Activated CD4-positive, alpha-beta memory T cell treated with anti-CD3 and anti-CD28 coated beads, Interleukin-2, amount 10 ng/mL, durations not matched to agents 7 days and 5 days (primary cell): ENCODE measurements at regions of chr11 and their contacts with region 1.

Region 1: DNA sequence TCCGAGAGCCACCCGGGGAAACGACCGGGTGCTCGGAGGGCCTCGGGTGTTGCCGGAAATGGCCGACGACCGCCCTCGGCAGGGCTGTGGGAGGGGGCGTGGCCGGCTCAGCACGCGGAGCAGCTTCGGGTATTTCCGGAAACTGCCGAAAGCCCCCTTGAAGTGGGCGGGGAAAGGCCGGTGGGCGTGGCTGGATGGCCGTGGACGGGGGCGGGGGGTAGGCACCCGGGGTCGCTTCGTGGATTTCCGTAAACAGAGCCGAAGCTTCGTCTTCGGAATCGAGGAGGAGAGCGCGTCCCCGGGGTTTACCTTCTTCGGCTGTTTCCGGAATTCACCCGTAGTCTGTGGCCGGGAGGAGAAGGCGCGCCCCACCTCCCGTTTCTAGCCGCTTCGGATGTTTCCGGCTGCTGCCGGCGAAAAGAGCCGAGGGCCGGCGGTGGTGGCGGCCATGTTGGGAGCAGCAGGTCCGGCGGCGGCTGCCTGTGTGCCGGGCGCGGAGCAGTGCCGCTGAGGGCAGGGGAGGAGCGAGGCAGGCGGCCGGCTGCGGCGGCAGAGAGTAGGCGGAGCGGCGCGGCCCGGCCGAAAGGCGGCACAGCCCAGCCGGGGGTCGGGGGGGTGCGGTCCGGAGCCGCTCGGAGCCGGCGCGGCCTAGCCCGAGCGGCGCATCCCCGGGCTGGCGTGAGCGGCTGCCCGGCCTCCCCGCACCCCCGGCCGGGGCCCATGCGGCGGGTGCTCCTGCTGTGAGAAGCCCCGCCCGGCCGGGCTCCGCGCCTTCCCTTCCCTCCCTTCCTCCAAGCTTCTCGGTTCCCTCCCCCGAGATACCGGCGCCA is at the start of gene MARK2:
- DNase-seq: peak; percentile 100
- H3K4me3 Mint-ChIP-seq: peak within 1 kb of the TSS; percentile 87
- H3K27ac Mint-ChIP-seq: peak within 1 kb of the TSS; percentile 85
- H3K4me1 Mint-ChIP-seq: peaks cover 49% of the 10 kb centered on the region
- H3K27me3 Mint-ChIP-seq: no peaks in the 10 kb centered on the region
- total RNA-seq, gene MARK2: 48.7 to 54.2 TPM

Region 2: DNA sequence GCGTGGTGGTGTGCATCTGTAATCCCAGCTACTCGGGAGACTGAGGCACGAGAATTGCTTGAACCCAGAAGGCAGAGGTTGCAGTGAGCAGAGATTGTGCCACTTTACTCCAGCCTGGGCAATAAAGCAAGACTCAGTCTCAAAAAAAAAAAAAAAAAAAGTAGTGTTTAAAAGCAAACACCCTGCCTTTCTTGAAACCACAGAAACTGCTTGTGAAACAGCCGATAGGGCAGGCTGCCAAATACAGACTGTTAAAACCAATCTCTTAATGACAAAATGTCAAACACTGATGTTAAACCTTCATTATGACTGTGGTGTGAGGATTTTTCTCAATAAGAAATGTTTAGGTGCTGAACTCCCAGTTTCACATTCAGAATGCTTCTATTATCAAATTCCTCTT is 27.3 kb after region 1 on chr11:
- CTCF ChIA-PET with region 1: interaction called, 9 read pairs
- POLR2A ChIA-PET with region 1: interaction called, 11 read pairs
- DNase-seq: peak; percentile 78
- H3K4me3 Mint-ChIP-seq: peak overlapping the region; percentile 49
- H3K27ac Mint-ChIP-seq: peak overlapping the region; percentile 80
- H3K4me1 Mint-ChIP-seq: peaks cover 77% of the 10 kb centered on the region
- H3K27me3 Mint-ChIP-seq: no peaks in the 10 kb centered on the region

Region 3: DNA sequence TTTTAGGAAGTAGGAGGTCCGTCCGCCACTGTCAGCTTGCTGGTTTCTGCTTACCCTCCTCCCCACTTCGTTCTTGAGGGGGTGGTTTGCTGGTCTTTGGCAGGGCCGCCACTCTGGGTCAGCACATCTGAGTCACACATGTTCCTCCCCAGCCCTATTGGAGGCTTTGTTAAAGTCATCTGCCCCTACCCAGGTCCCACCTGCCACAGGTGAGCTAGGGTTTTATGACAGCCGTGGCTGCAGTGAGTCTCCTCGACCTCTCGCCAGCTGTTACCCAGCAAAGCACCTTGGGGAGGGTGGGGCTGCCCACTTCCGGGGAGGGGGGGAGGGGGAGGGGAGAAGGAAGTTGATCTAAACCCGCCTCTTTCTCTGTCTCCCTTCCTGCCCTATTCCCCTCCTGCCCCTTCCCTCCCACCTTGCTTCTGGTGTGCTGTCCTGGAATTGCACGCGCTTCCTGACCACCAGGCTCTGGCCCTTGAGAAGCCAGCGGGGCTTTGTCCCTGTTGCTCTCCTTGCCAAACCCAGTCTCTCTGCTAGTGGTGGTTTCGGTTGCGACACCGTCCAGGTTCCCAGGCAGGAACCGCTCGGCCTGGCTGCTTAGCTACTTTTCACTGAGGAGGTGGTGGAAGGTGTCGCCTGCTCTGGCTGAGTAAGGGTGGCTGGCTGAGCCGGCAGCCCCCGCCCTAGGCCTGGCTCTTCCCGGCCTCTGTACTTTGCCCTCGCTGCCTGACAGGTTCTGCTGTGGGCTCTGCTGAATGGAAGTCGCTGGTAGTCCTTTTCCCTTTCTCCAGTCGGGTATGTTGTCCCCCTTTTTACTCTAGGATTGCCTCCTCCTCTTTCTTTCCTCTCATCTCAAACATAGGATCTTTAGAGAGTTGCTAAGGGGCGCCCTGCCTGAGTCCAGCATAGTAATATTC is 49.5 kb after region 1 on chr11:
- CTCF ChIA-PET with region 1: interaction called, 15 read pairs
- POLR2A ChIA-PET with region 1: interaction called, 14 read pairs
- DNase-seq: peak; percentile 79
- H3K4me3 Mint-ChIP-seq: peak overlapping the region; percentile 93
- H3K27ac Mint-ChIP-seq: peak overlapping the region; percentile 93
- H3K4me1 Mint-ChIP-seq: peaks cover 75% of the 10 kb centered on the region
- H3K27me3 Mint-ChIP-seq: no peaks in the 10 kb centered on the region

Region 4: GRCh38 chr11:63920939-63921417 is 82.1 kb after region 1 on chr11:
- CTCF ChIA-PET with region 1: interaction called, 11 read pairs
- POLR2A ChIA-PET with region 1: interaction called, 3 read pairs
- DNase-seq: no peak
- H3K4me3 Mint-ChIP-seq: no peak overlapping the region
- H3K27ac Mint-ChIP-seq: no peak overlapping the region
- H3K4me1 Mint-ChIP-seq: peaks cover 9% of the 10 kb centered on the region
- H3K27me3 Mint-ChIP-seq: peaks cover 36% of the 10 kb centered on the region

Region 5: DNA sequence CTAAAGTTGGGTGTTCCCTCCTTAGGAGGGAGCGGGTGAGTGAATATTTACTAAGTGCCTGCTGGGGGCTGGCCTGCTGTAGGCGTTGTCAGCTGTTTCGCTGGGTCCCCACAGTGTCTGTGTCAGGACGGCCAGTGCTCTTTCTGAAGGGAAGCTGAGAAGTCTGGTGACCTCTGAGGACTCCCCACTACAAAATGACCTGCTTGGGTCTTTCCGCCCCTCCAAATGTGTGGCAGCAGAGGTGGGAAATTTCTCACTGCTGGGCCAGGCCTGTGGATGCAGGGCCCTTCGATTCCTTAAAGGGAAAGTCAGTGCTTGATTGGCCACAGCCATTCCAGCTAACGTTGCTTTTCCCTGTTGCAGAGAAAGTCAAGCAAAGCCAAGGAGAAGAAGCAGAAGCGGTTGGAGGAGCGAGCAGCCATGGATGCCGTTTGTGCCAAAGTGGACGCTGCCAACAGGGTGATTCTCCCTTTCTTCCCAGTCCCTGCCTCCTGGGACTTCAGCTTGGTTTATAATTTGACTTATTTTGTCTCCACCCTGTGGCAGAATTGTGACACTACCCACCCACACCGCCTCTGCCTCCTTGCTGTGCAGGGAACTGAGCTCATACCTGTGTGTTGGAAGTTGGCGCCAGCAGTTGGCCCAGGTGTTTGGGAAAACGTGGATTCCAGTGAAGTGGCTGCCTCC is 106.7 kb after region 1 on chr11:
- CTCF ChIA-PET with region 1: interaction called, 172 read pairs
- POLR2A ChIA-PET with region 1: interaction called, 31 read pairs
- DNase-seq: peak; percentile 59
- H3K4me3 Mint-ChIP-seq: no peak overlapping the region
- H3K27ac Mint-ChIP-seq: no peak overlapping the region
- H3K4me1 Mint-ChIP-seq: peaks cover 15% of the 10 kb centered on the region
- H3K27me3 Mint-ChIP-seq: no peaks in the 10 kb centered on the region

Region 6: DNA sequence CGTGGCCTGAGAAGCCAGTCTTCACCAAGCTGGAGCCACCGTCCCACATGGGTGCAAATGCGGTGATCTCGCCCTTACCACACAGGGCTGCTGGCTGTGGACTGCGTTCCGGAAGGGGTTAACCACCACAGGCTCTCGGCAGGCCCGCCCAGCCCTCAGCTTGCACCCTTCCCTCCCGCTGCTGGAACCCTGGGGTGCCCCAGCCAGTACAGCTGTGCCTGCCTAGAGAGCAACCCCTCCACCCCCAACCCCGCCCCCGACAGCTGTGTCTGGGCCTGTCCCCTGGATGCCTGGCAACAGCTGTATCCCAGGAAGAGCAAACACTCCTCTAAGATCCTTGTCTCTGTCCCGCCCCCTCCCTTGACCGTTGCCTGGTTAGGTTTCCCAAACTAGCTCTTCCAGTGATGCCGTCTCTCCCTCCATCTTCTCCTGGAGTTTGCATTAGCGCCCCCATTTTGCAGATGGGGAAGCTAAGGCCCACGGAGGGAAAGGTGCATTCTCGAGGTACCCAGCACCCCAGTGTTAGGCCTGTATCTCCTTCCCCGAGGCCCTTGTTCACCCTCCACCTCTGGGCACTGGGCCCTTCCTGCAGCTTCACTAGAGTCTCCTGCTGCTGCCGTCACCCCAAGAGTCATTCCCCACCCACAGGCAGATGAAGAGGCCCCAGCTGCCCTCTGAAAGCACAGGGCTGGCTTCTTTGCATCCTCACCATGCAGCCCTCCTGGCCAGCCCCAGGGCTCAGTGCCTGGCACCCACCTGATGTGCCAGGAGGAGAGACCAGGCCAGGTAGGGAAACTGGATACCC is 122.9 kb after region 1 on chr11:
- CTCF ChIA-PET with region 1: interaction called, 4 read pairs
- POLR2A ChIA-PET with region 1: interaction called, 12 read pairs
- DNase-seq: peak; percentile 67
- H3K4me3 Mint-ChIP-seq: peak overlapping the region; percentile 19
- H3K27ac Mint-ChIP-seq: no peak overlapping the region
- H3K4me1 Mint-ChIP-seq: peaks cover 26% of the 10 kb centered on the region
- H3K27me3 Mint-ChIP-seq: peaks cover 3% of the 10 kb centered on the region